Stomach (tissue), 19 donors: ENCODE measurements at regions of chr11 and their contacts with region 1.

Region 1: GRCh38 chr11:66835768-66836405 is 7.4 kb upstream of the RCE1 start:
- DNase-seq: no peak
- H3K4me3 ChIP-seq: no peak overlapping the region
- H3K27ac ChIP-seq: no peak overlapping the region
- H3K4me1 ChIP-seq: peaks cover 0 to 24% (median 6%) of the 10 kb centered on the region in 4 donors
- H3K27me3 ChIP-seq: no peaks in the 10 kb centered on the region
- CTCF ChIP-seq: no peak
- EP300 ChIP-seq: no peak
- POLR2A ChIP-seq: no peak

Region 2: GRCh38 chr11:66626926-66627325 is 209.0 kb before region 1 on chr11:
- intact Hi-C with region 1: no loop called
- DNase-seq: no peak
- H3K4me3 ChIP-seq: no peak overlapping the region
- H3K27ac ChIP-seq: no peak overlapping the region
- H3K4me1 ChIP-seq: peaks cover 25 to 59% (median 45%) of the 10 kb centered on the region in 4 donors
- H3K27me3 ChIP-seq: no peaks in the 10 kb centered on the region
- CTCF ChIP-seq: no peak
- EP300 ChIP-seq: no peak
- POLR2A ChIP-seq: no peak

Region 3: GRCh38 chr11:66694732-66695207 is 141.1 kb before region 1 on chr11:
- intact Hi-C with region 1: loop called (anchors 2 kb)
- DNase-seq: peak; percentile 93 to 95
- H3K4me3 ChIP-seq: no peak overlapping the region
- H3K27ac ChIP-seq: no peak overlapping the region
- H3K4me1 ChIP-seq: peaks cover 0 to 7% (median 2%) of the 10 kb centered on the region in 4 donors
- H3K27me3 ChIP-seq: no peaks in the 10 kb centered on the region
- CTCF ChIP-seq: peak in 5 of 7 experiments; percentile 91 to 100 (median 96)
- EP300 ChIP-seq: no peak
- POLR2A ChIP-seq: no peak

Region 4: DNA sequence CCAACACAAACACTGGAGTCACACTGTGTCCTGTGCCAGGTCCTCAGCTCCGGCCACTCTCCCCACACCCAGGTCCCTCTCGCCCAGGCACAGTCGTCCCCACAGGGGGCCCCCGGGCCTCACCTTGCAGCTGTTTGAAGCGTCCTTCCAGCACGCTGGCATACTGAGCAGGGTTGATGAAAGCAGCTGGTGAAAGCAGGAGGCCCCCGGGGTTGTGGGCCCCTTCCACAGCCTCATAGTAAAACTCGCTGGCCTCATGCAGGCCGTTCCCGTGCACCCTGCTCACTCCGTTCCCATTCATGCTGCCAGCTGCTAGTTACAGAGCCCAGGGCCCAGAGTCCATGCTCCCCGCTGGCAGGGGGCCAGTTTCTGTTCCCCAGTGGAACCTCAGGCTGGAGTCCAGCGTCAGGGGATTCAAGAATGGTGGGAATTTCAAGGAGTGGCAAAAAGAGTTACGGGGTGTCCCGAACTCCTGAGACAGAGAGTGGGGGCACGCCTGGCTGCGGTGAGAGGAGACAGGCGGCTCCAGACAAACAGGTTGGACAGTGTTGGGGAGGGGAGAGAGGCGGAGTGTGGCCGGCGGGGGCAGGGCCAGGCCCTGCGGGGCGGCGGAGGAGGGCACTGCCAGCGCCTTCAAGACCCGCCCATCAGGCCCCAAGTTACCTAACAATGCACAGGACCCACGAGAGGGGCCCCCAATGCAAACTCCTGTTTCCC is 117.4 kb before region 1 on chr11:
- intact Hi-C with region 1: no loop called
- DNase-seq: peak; percentile 60 to 86
- H3K4me3 ChIP-seq: peak overlapping the region; percentile 16 to 41 (median 29)
- H3K27ac ChIP-seq: peak overlapping the region in 3 of 5 donors; percentile 2 to 56 (median 41)
- H3K4me1 ChIP-seq: peaks cover 5 to 27% (median 10%) of the 10 kb centered on the region in 4 donors
- H3K27me3 ChIP-seq: peaks cover 0 to 13% (median 0%) of the 10 kb centered on the region in 3 donors
- CTCF ChIP-seq: peak in 4 of 7 experiments; percentile 14 to 54 (median 36)
- EP300 ChIP-seq: no peak
- POLR2A ChIP-seq: no peak

Region 5: GRCh38 chr11:66749070-66749469 is 86.8 kb before region 1 on chr11:
- intact Hi-C with region 1: no loop called
- DNase-seq: peak in 1 of 2 donors; percentile 26
- H3K4me3 ChIP-seq: no peak overlapping the region
- H3K27ac ChIP-seq: no peak overlapping the region
- H3K4me1 ChIP-seq: peaks cover 0 to 16% (median 10%) of the 10 kb centered on the region in 4 donors
- H3K27me3 ChIP-seq: no peaks in the 10 kb centered on the region
- CTCF ChIP-seq: no peak
- EP300 ChIP-seq: no peak
- POLR2A ChIP-seq: no peak